Right ventricle myocardium inferior (tissue), 1 donor: ENCODE measurements at regions of chr2 and their contacts with region 1.

Region 1: DNA sequence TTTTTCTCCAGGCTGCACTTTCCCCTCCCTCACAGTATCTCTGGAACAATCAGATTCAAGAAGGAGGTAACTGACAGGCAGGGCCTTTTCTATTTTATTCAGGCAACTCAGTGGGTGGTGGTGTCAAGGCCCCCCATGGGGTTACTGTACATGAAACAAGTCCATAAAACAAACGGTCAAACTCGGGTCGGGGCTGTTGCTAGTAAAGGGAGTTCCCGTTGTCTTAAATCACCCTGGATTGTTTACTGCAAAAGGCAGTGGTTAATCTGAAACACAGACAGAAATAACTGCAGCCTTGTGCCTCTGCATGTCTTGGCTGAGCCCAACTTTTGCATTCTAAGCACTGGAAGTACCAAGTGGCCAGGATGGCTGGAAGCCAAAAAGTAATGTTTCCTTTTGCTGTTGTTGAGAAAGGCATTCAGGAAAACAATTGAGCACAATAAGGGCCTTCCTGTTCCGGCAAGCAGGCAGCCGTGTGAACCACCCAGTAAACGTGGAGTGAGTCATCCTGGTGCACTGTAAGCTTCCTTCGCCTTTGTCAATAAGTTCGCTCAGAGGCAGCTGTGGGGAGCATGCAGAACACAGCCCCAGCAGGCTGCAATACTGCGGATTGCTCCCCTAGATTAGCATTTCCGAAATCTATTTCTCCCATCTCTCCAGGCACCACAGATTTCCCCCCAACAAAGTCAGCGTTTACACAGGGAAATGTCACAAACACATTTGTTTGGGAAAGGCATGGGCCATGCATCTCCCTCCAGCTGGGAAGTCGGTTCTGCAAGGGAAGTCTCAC is 149.6 kb downstream of the IRS1 start:
- DNase-seq: no peak
- ATAC-seq: peak; percentile 84

Region 2: DNA sequence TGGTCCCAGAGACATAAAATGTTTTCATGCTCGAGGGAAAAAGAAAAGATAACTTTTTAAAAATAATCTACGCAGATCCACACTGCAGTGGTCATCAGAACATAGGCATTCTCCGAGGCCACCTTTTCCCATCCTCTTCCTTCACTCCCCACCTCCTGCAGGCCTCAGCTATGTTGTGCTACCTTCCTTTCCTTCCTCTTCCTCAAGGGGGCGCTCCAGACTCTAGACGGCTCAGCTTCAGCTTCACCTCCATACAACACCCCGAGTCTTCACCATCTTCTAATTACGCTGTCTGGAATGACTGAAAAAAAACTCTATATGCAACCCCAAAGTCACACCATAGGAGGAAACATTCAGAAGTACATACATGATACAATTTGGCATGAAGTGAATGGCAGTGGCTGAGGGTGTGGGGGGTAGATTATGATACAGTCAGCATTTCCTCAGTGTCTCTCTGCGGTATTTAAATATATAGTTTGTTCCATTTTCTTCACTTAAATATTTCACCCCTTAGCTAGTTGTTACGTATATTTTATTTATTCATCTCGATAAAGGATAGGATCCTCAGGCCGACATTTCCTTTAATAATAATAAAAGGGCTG is 434.1 kb before region 1 on chr2:
- intact Hi-C with region 1: loop called (anchors 10 kb)
- DNase-seq: no peak
- ATAC-seq: peak; percentile 79

Region 3: GRCh38 chr2:226690461-226691024 is 40.5 kb after region 1 on chr2:
- intact Hi-C with region 1: loop called (anchors 5 kb)
- DNase-seq: no peak
- ATAC-seq: peak; percentile 46

Region 4: DNA sequence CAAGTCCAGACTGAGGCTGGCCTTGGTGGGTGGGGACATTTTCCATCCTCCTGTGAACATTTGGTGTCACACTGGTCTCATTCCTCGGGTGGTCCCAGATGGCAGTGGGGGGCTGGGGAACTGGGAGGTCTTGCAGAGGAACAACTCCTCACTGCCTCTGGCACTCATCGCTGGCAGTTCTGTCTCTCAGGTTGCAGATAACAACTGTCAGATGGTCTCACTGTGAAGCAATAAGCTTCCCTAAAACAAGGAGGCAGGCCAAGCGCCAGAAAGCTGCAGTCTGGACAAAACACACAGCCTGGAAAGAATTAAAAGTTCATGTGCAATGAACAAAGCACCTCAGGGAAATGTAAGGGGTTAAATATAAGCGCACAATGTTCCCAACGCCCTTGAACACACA is 71.5 kb after region 1 on chr2:
- intact Hi-C with region 1: loop called (anchors 5 kb)
- DNase-seq: peak; percentile 64
- ATAC-seq: no peak